PC-9 (cell line): ENCODE measurements at regions of chr12 and their contacts with region 1.

Region 1: DNA sequence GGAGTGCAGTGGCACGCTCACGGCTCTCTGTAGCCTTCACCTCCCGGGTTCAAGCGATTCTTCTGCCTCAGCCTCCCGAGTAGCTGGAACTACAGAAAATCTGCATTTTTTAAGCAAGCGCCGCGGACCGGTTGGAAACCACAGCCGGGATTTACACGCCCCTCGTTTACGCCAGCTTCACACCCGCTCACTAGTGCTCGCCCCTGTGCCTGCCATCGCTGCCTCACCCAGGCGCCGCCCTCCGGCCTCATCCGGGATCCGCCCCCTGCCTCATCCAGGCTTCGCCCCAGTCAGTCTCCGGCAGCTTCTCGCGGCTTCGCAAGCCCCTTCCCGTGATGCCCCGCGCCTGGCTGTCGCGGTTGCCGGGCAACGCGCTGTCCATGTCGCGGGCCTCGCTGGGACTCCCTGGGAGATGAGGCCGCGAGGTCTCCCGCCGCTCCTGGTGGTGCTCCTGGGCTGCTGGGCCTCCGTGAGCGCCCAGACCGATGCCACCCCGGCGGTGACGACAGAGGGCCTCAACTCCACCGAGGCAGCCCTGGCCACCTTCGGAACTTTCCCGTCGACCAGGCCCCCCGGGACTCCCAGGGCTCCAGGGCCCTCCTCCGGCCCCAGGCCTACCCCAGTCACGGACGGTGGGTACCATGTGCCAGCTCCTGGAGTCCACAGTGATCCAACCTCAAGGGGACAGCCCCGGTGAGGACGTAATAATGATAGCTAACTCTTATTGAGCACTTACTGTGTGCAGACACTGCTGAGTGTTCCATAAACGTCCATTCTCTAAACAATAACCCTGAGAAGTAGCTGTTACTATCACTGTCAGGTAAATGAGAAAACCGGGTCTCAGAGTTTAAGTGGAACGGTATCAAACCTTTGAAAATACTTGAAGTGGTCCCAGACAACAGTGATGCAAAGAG is at the start of gene TCTN1:
- DNase-seq: peak; percentile 88 to 96
- H3K4me3 ChIP-seq: peak within 1 kb of the TSS; percentile 80
- H3K27ac ChIP-seq: no peak within 1 kb of the TSS
- H3K4me1 ChIP-seq: peaks cover 18% of the 10 kb centered on the region
- H3K27me3 ChIP-seq: no peaks in the 10 kb centered on the region
- CTCF ChIP-seq: no peak; the same call in 1 of the 2 replicates
- total RNA-seq, gene TCTN1: 58.3 and 66.8 TPM in 2 replicates

Region 2: GRCh38 chr12:110555577-110556406 is 58.2 kb before region 1 on chr12:
- CTCF ChIA-PET with region 1: no interaction called
- POLR2A ChIA-PET with region 1: no interaction called
- intact Hi-C with region 1: no loop called
- DNase-seq: peak in 1 of 2 experiments; percentile 43
- H3K4me3 ChIP-seq: no peak overlapping the region
- H3K27ac ChIP-seq: peak overlapping the region; percentile 58
- H3K4me1 ChIP-seq: peaks cover 24% of the 10 kb centered on the region
- H3K27me3 ChIP-seq: no peaks in the 10 kb centered on the region
- CTCF ChIP-seq: no peak

Region 3: DNA sequence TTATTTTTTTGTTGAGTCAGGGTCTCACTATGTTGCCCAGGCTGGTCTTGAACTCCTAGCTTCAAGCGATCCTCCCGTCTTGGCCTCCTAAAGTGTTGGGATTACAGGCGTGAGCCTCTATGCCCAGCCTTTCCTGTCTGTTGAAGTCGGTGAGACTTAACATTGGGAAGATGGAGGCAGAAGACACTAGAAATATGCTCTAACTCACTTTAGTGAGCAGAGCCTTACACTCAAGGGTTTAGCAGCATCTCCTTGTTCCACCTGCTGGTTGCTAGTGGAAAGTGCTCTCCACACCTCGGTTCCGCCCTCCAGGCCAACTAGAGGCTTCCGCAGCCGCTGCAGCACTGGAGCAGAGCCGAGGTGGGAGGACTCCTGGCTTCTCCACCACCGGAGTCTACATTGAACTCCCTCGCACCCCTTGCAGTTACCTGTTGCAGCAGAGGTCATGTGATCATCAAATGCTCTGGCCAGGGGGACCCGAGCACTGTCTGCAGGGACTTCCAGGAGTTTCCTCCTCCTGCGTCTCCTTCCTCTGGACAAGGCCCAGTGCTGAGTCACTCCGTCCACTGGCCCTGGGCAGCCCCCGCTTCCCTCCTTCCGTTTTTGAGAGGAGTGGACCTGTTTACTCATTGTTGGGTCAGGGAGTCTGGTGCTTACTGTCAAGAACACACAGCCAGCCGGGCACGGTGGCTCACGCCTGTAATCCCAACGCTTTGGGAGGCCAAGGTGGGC is 84.3 kb after region 1 on chr12:
- CTCF ChIA-PET with region 1: no interaction called
- POLR2A ChIA-PET with region 1: no interaction called
- intact Hi-C with region 1: loop called (anchors 5 kb)
- DNase-seq: peak; percentile 62 to 70
- H3K4me3 ChIP-seq: no peak overlapping the region
- H3K27ac ChIP-seq: no peak overlapping the region
- H3K4me1 ChIP-seq: no peaks in the 10 kb centered on the region
- H3K27me3 ChIP-seq: no peaks in the 10 kb centered on the region
- CTCF ChIP-seq: peak; percentile 66

Region 4: DNA sequence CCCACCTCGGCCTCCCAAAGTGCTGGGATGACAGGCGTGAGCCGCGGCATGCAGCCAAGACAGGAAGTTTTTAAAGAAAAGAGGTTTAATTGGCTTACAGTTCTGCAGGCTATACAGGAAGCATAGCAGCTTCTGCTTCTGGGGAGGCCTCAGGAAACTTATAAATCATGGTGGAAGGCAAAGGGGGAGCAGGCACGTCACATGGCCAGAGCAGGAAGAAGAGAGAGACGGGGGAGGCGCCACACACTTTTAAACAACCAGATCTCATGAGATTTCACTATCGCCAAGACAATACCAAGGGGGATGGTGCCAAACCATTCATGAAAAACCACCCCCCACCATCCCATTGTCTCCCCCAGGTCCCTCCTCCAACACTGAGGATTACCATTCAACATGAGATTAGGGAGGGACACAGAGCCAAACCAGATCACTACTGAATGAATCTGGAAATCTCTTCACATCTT is 246.8 kb after region 1 on chr12:
- CTCF ChIA-PET with region 1: no interaction called
- POLR2A ChIA-PET with region 1: interaction called, 30 read pairs
- intact Hi-C with region 1: no loop called
- DNase-seq: no peak
- H3K4me3 ChIP-seq: no peak overlapping the region
- H3K27ac ChIP-seq: no peak overlapping the region
- H3K4me1 ChIP-seq: no peaks in the 10 kb centered on the region
- H3K27me3 ChIP-seq: 0 out of 2 replicates have a peak, but pooled peaks cover 14% of the 10 kb centered on the region
- CTCF ChIP-seq: no peak